Naive thymus-derived CD4-positive, alpha-beta T cell (primary cell): ENCODE measurements at regions of chr11 and their contacts with region 1.

Region 1: GRCh38 chr11:121451986-121452608 is at the start of gene SORL1:
- DNase-seq: peak; percentile 58 to 75 (median 72)
- ATAC-seq: peak; percentile 74
- H3K4me3 ChIP-seq: peak within 1 kb of the TSS; percentile 80
- H3K4me3 Mint-ChIP-seq: peak within 1 kb of the TSS; percentile 90 to 99 (median 98)
- H3K27ac ChIP-seq: peak within 1 kb of the TSS; percentile 83
- H3K27ac Mint-ChIP-seq: peak within 1 kb of the TSS; percentile 90 to 100 (median 96)
- H3K4me1 ChIP-seq: peaks cover 50 to 73% of the 10 kb centered on the region in 2 donors
- H3K4me1 Mint-ChIP-seq: peaks cover 69 to 87% (median 81%) of the 10 kb centered on the region in 7 donors
- H3K27me3 ChIP-seq: no peaks in the 10 kb centered on the region
- H3K27me3 Mint-ChIP-seq: no peaks in the 10 kb centered on the region
- total RNA-seq, gene SORL1: 179 to 555 (median 375) TPM

Region 2: DNA sequence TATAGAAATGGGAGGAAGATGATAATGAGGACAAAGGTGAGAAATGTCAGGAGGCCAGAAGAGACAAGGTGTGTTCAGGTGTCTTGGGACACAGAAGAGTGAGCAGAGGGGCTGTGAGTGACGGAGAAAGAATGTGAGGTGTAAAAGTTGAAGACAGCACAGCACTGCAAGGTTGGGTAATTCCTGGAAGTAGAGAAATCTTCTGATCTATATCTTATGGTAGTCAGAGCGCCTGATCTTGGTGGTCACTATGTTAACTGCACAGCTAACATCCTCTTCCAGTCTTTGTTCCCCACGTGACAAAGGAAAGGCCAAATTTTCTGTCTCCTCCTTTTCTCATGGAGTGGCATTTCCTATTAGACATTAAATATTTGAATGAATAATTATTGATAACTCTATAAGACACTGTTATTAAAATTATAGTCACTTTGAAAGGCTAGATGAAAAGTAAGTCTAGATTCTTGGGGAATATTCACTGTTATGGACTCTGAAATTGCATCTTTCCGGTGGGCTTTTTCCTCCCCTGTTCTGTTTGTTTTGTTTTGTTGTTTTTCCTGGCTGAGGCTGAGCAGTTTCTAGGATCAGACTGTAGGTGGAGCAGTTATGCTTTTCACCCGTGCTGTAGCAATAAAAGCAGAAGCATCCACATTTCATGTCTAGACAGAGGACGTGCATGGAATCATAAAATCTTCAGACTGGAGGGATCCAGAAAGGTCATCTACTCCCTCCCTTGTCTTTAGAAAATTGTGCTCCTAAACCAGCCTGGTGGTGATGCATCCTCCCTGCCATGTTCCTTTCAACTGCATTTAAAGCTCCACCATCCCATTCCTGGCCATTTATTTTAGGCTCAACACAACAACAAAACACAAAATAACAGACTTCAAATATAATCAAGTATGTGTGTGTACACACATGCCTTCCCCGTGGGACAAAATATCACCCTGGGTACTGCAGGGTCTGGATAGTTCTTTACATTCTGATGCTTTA is 133.0 kb before region 1 on chr11:
- CTCF ChIA-PET with region 1: interaction called, 5 read pairs
- POLR2A ChIA-PET with region 1: interaction called, 107 read pairs
- intact Hi-C with region 1: loop called (anchors 1 to 2 kb)
- DNase-seq: peak in 7 of 9 donors; percentile 17 to 64 (median 56)
- ATAC-seq: peak; percentile 87
- H3K4me3 ChIP-seq: no peak overlapping the region
- H3K4me3 Mint-ChIP-seq: peak overlapping the region in 1 of 10 donors; percentile 47
- H3K27ac ChIP-seq: no peak overlapping the region
- H3K27ac Mint-ChIP-seq: peak overlapping the region in 7 of 9 donors; percentile 4 to 49 (median 9)
- H3K4me1 ChIP-seq: peaks cover 0 to 6% of the 10 kb centered on the region in 2 donors
- H3K4me1 Mint-ChIP-seq: peaks cover 15 to 28% (median 23%) of the 10 kb centered on the region in 7 donors
- H3K27me3 ChIP-seq: no peaks in the 10 kb centered on the region
- H3K27me3 Mint-ChIP-seq: peaks cover 0 to 6% (median 0%) of the 10 kb centered on the region in 5 donors

Region 3: GRCh38 chr11:121367001-121367843 is 84.9 kb before region 1 on chr11:
- CTCF ChIA-PET with region 1: interaction called, 7 read pairs
- POLR2A ChIA-PET with region 1: interaction called, 51 read pairs
- intact Hi-C with region 1: no loop called
- DNase-seq: peak in 7 of 9 donors; percentile 40 to 65 (median 58)
- ATAC-seq: peak; percentile 74
- H3K4me3 ChIP-seq: peak overlapping the region; percentile 53
- H3K4me3 Mint-ChIP-seq: peak overlapping the region; percentile 68 to 94 (median 83)
- H3K27ac ChIP-seq: peak overlapping the region; percentile 55
- H3K27ac Mint-ChIP-seq: peak overlapping the region; percentile 76 to 98 (median 94)
- H3K4me1 ChIP-seq: peaks cover 15 to 33% of the 10 kb centered on the region in 2 donors
- H3K4me1 Mint-ChIP-seq: peaks cover 35 to 59% (median 45%) of the 10 kb centered on the region in 7 donors
- H3K27me3 ChIP-seq: no peaks in the 10 kb centered on the region
- H3K27me3 Mint-ChIP-seq: no peaks in the 10 kb centered on the region

Region 4: GRCh38 chr11:121417055-121417551 is 35.0 kb before region 1 on chr11:
- CTCF ChIA-PET with region 1: interaction called, 4 read pairs
- POLR2A ChIA-PET with region 1: interaction called, 119 read pairs
- intact Hi-C with region 1: loop called (anchors 1 to 2 kb)
- DNase-seq: peak; percentile 28 to 55 (median 40)
- ATAC-seq: peak; percentile 59
- H3K4me3 ChIP-seq: peak overlapping the region; percentile 20
- H3K4me3 Mint-ChIP-seq: peak overlapping the region; percentile 25 to 75 (median 62)
- H3K27ac ChIP-seq: peak overlapping the region; percentile 48
- H3K27ac Mint-ChIP-seq: peak overlapping the region; percentile 79 to 96 (median 89)
- H3K4me1 ChIP-seq: peaks cover 36 to 53% of the 10 kb centered on the region in 2 donors
- H3K4me1 Mint-ChIP-seq: peaks cover 47 to 82% (median 70%) of the 10 kb centered on the region in 7 donors
- H3K27me3 ChIP-seq: no peaks in the 10 kb centered on the region
- H3K27me3 Mint-ChIP-seq: no peaks in the 10 kb centered on the region

Region 5: GRCh38 chr11:121464352-121464946 is 12.4 kb after region 1 on chr11:
- CTCF ChIA-PET with region 1: interaction called, 68 read pairs
- POLR2A ChIA-PET with region 1: interaction called, 425 read pairs
- intact Hi-C with region 1: loop called (anchors 1 kb)
- DNase-seq: peak in 7 of 9 donors; percentile 29 to 83 (median 45)
- ATAC-seq: peak; percentile 66
- H3K4me3 ChIP-seq: peak overlapping the region; percentile 23
- H3K4me3 Mint-ChIP-seq: peak overlapping the region; percentile 50 to 99 (median 80)
- H3K27ac ChIP-seq: peak overlapping the region; percentile 77
- H3K27ac Mint-ChIP-seq: peak overlapping the region; percentile 85 to 99 (median 92)
- H3K4me1 ChIP-seq: peaks cover 97 to 99% of the 10 kb centered on the region in 2 donors
- H3K4me1 Mint-ChIP-seq: peaks cover 92 to 100% (median 96%) of the 10 kb centered on the region in 7 donors
- H3K27me3 ChIP-seq: no peaks in the 10 kb centered on the region
- H3K27me3 Mint-ChIP-seq: no peaks in the 10 kb centered on the region

Region 6: GRCh38 chr11:121534131-121535093 is 82.3 kb after region 1 on chr11:
- CTCF ChIA-PET with region 1: interaction called, 3 read pairs
- POLR2A ChIA-PET with region 1: interaction called, 4 read pairs
- intact Hi-C with region 1: loop called in 1 of 2 experiments (anchors 5 kb)
- DNase-seq: no peak
- ATAC-seq: no peak
- H3K4me3 ChIP-seq: no peak overlapping the region
- H3K4me3 Mint-ChIP-seq: peak overlapping the region in 1 of 10 donors; percentile 32
- H3K27ac ChIP-seq: no peak overlapping the region
- H3K27ac Mint-ChIP-seq: peak overlapping the region in 6 of 9 donors; percentile 22 to 80 (median 70)
- H3K4me1 ChIP-seq: peaks cover 0 to 9% of the 10 kb centered on the region in 2 donors
- H3K4me1 Mint-ChIP-seq: peaks cover 27 to 71% (median 57%) of the 10 kb centered on the region in 7 donors
- H3K27me3 ChIP-seq: no peaks in the 10 kb centered on the region
- H3K27me3 Mint-ChIP-seq: no peaks in the 10 kb centered on the region

Region 7: GRCh38 chr11:121741761-121742361 is 289.8 kb after region 1 on chr11:
- CTCF ChIA-PET with region 1: no interaction called
- POLR2A ChIA-PET with region 1: no interaction called
- intact Hi-C with region 1: no loop called
- DNase-seq: no peak
- ATAC-seq: no peak
- H3K4me3 ChIP-seq: no peak overlapping the region
- H3K4me3 Mint-ChIP-seq: no peak overlapping the region
- H3K27ac ChIP-seq: no peak overlapping the region
- H3K27ac Mint-ChIP-seq: no peak overlapping the region
- H3K4me1 ChIP-seq: no peaks in the 10 kb centered on the region
- H3K4me1 Mint-ChIP-seq: no peaks in the 10 kb centered on the region
- H3K27me3 ChIP-seq: no peaks in the 10 kb centered on the region
- H3K27me3 Mint-ChIP-seq: peaks cover 0 to 34% (median 13%) of the 10 kb centered on the region in 5 donors

Region 8: GRCh38 chr11:122634497-122634896 is 1182.4 kb after region 1 on chr11:
- CTCF ChIA-PET with region 1: no interaction called
- POLR2A ChIA-PET with region 1: no interaction called
- intact Hi-C with region 1: no loop called
- DNase-seq: no peak
- ATAC-seq: no peak
- H3K4me3 ChIP-seq: no peak overlapping the region
- H3K4me3 Mint-ChIP-seq: no peak overlapping the region
- H3K27ac ChIP-seq: no peak overlapping the region
- H3K27ac Mint-ChIP-seq: peak overlapping the region in 1 of 9 donors; percentile 5
- H3K4me1 ChIP-seq: peaks cover 0 to 3% of the 10 kb centered on the region in 2 donors
- H3K4me1 Mint-ChIP-seq: peaks cover 0 to 35% (median 15%) of the 10 kb centered on the region in 7 donors
- H3K27me3 ChIP-seq: no peaks in the 10 kb centered on the region
- H3K27me3 Mint-ChIP-seq: peaks cover 0 to 17% (median 0%) of the 10 kb centered on the region in 5 donors